MCF 10A (cell line): ENCODE measurements at regions of chr1 and their contacts with region 1.

Region 1: DNA sequence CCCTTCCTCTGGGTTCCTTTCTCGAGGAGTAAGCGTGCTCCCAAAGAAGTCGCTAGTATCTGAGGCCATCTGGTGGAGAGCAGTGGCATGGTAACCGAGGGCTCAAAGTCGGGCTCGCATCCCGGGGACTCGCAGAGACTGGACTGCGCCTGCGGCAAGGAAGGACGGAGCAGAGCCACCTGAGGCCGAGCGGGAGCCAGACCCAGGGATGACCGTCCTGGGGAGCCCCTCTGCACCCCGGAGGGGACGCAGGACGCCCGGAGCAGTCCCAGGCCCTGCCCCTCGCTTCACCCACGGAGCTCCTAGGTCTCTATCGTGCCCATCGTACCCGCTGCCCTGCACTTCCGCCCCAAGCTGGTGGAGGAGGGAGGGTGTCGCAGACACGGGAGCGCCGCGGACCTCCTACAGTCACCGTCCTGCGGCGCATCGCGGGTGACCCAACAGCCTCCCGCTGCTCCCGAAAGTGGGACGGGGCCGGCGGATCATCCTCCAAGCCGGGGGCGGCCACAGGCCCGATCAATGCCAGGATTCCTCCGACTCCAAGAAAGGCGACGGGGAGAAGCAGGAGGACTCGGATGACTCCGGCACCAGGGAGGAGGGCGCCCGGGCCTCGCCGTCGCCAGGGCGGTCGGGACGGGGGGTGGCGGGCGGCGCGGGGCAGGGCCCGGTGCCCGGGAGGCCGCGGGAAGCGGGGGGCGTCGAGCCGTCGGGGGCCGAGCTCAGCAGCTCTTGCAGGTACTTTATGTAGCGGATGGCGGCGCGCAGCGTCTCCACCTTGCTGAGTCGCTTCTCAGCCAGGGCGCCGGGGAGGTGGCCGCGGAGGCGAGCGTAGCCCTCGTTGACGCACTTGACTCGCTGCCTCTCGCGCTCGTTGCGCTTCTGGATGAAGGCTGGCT is 2.3 kb upstream of the CACNA1S start:
- DNase-seq: peak; percentile 98
- H3K4me3 Mint-ChIP-seq: peak overlapping the region; percentile 78
- H3K27ac Mint-ChIP-seq: peak overlapping the region; percentile 55
- H3K4me1 Mint-ChIP-seq: no peaks in the 10 kb centered on the region
- H3K27me3 Mint-ChIP-seq: no peaks in the 10 kb centered on the region
- CTCF ChIP-seq: peak; percentile 98

Region 2: DNA sequence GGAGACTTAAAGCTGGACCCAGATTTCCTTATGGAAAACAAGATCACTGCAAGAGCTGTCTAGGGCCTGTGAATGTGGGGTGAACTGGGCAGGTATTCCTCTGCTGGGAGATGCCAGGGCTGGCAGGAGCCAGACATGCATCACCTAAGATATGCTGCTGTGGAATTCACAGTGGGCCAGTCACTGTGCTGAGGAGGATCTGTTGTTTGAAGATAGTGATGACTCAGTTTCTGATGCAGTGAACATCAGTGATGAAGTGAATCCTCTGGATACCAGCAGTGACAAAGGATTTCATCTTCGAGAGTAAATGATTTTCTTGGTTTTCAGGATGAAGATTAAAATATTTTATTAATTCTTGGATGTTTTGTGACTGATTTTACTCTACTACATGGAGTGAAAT is 405.7 kb before region 1 on chr1:
- CTCF ChIA-PET with region 1: no interaction called
- POLR2A ChIA-PET with region 1: no interaction called
- intact Hi-C with region 1: no loop called
- DNase-seq: no peak
- H3K4me3 Mint-ChIP-seq: no peak overlapping the region
- H3K27ac Mint-ChIP-seq: no peak overlapping the region
- H3K4me1 Mint-ChIP-seq: peaks cover 5% of the 10 kb centered on the region
- H3K27me3 Mint-ChIP-seq: no peaks in the 10 kb centered on the region
- CTCF ChIP-seq: no peak

Region 3: GRCh38 chr1:200890818-200891773 is 223.4 kb before region 1 on chr1:
- CTCF ChIA-PET with region 1: interaction called, 7 read pairs
- POLR2A ChIA-PET with region 1: no interaction called
- intact Hi-C with region 1: loop called (anchors 10 kb)
- DNase-seq: peak; percentile 81
- H3K4me3 Mint-ChIP-seq: peak overlapping the region; percentile 80
- H3K27ac Mint-ChIP-seq: peak overlapping the region; percentile 83
- H3K4me1 Mint-ChIP-seq: peaks cover 59% of the 10 kb centered on the region
- H3K27me3 Mint-ChIP-seq: no peaks in the 10 kb centered on the region
- CTCF ChIP-seq: peak; percentile 61

Region 4: DNA sequence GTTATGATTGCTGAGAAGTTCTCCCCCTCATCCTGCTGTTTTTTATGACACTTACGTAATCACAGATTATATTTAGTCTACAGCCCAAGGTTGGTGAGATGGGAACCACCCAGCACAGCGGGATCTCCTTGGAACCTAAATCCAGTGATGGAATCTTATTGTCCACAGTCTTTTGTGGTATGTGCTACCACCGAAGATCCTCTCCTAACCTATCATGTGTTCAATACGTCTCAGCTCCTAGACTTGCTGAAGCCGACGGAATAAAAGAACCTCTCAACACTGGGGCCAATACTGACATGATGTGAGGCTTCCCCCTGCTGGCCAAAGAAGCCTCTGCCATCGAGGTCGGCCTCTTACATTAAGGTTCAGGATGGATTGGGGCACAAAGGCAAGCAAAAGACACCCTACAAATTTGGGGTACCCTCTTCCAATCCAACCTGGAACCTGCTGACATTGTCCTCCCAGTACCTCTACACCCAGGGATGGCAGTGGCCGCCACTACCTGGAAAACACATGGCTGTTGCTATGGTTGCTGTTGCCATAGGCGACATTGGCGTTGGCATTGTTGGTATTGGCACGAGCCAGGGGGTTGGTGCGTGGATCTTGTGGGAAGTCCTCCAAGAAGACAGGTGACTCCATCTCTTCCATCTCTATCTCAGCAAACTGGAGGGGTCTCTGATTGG is 71.6 kb before region 1 on chr1:
- CTCF ChIA-PET with region 1: interaction called, 9 read pairs
- POLR2A ChIA-PET with region 1: no interaction called
- intact Hi-C with region 1: loop called (anchors 1 kb)
- DNase-seq: peak; percentile 89
- H3K4me3 Mint-ChIP-seq: no peak overlapping the region
- H3K27ac Mint-ChIP-seq: no peak overlapping the region
- H3K4me1 Mint-ChIP-seq: no peaks in the 10 kb centered on the region
- H3K27me3 Mint-ChIP-seq: peaks cover 33% of the 10 kb centered on the region
- CTCF ChIP-seq: peak; percentile 98

Region 5: GRCh38 chr1:201085916-201086735 is 28.4 kb before region 1 on chr1:
- CTCF ChIA-PET with region 1: interaction called, 54 read pairs
- POLR2A ChIA-PET with region 1: interaction called, 3 read pairs
- intact Hi-C with region 1: loop called (anchors 1 kb)
- DNase-seq: peak; percentile 82
- H3K4me3 Mint-ChIP-seq: no peak overlapping the region
- H3K27ac Mint-ChIP-seq: no peak overlapping the region
- H3K4me1 Mint-ChIP-seq: peaks cover 7% of the 10 kb centered on the region
- H3K27me3 Mint-ChIP-seq: peaks cover 31% of the 10 kb centered on the region
- CTCF ChIP-seq: peak; percentile 95

Region 6: GRCh38 chr1:201104141-201104540 is 10.3 kb before region 1 on chr1:
- CTCF ChIA-PET with region 1: interaction called, 46 read pairs
- POLR2A ChIA-PET with region 1: interaction called, 4 read pairs
- intact Hi-C with region 1: no loop called
- DNase-seq: no peak
- H3K4me3 Mint-ChIP-seq: no peak overlapping the region
- H3K27ac Mint-ChIP-seq: no peak overlapping the region
- H3K4me1 Mint-ChIP-seq: no peaks in the 10 kb centered on the region
- H3K27me3 Mint-ChIP-seq: no peaks in the 10 kb centered on the region
- CTCF ChIP-seq: no peak

Region 7: GRCh38 chr1:201137579-201138310 is 23.3 kb after region 1 on chr1:
- CTCF ChIA-PET with region 1: interaction called, 10 read pairs
- POLR2A ChIA-PET with region 1: interaction called, 3 read pairs
- intact Hi-C with region 1: no loop called
- DNase-seq: peak; percentile 78
- H3K4me3 Mint-ChIP-seq: no peak overlapping the region
- H3K27ac Mint-ChIP-seq: no peak overlapping the region
- H3K4me1 Mint-ChIP-seq: peaks cover 11% of the 10 kb centered on the region
- H3K27me3 Mint-ChIP-seq: no peaks in the 10 kb centered on the region
- CTCF ChIP-seq: no peak

Region 8: DNA sequence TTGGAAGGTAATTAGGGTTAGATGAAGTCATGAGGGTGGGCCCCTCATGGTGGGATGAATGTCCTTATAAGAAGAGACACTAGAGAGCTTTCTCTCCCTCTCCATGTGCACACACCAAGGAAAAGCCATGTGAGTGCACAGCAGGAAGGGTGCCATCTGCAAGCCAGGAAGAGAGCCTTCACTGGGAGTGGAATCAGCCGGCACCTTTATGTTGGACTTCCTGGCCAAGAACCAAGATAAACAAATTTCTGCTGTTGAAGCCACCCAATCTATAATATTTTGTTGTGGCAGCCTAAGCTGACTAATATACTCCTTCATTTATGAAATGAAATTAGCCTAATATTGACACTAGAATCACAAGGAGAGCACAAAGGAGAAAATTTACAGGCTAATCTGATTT is 130.6 kb after region 1 on chr1:
- CTCF ChIA-PET with region 1: no interaction called
- POLR2A ChIA-PET with region 1: no interaction called
- intact Hi-C with region 1: no loop called
- DNase-seq: no peak
- H3K4me3 Mint-ChIP-seq: no peak overlapping the region
- H3K27ac Mint-ChIP-seq: no peak overlapping the region
- H3K4me1 Mint-ChIP-seq: peaks cover 7% of the 10 kb centered on the region
- H3K27me3 Mint-ChIP-seq: peaks cover 33% of the 10 kb centered on the region
- CTCF ChIP-seq: no peak

Region 9: DNA sequence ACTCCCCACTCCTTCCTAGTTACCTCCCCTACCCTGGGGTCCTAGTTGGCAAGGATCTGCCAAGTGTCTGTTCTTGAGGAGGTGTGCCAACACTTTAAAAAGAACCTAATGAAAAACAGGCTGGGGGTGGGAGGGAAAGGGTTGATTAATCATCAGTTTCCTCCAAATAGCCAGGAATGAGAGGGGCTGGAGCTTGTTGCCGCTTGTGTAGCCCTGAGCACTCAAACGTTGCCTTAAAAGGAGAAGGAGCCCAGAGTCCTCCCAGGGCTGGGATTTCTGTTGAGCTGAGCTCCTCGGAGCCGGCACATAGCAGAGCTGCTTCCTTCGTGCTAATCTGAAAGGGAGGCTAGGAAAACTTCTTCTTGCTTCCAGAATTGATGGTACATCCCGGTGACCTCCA is 790.1 kb after region 1 on chr1:
- CTCF ChIA-PET with region 1: no interaction called
- POLR2A ChIA-PET with region 1: no interaction called
- intact Hi-C with region 1: no loop called
- DNase-seq: peak; percentile 39
- H3K4me3 Mint-ChIP-seq: no peak overlapping the region
- H3K27ac Mint-ChIP-seq: no peak overlapping the region
- H3K4me1 Mint-ChIP-seq: no peaks in the 10 kb centered on the region
- H3K27me3 Mint-ChIP-seq: peaks cover 19% of the 10 kb centered on the region
- CTCF ChIP-seq: no peak